Breast epithelium (tissue), 4 donors: ENCODE measurements at regions of chr1 and their contacts with region 1.

Region 1: GRCh38 chr1:210089846-210090245 is 142.8 kb upstream of the SERTAD4 start:
- DNase-seq: no peak
- H3K4me3 ChIP-seq: no peak overlapping the region
- H3K27ac ChIP-seq: no peak overlapping the region
- H3K4me1 ChIP-seq: no peaks in the 10 kb centered on the region
- H3K27me3 ChIP-seq: no peaks in the 10 kb centered on the region
- CTCF ChIP-seq: no peak
- POLR2A ChIP-seq: no peak

Region 2: GRCh38 chr1:210830034-210831028 is 740.5 kb after region 1 on chr1:
- intact Hi-C with region 1: loop called (anchors 10 kb)
- DNase-seq: no peak
- H3K4me3 ChIP-seq: no peak overlapping the region
- H3K27ac ChIP-seq: no peak overlapping the region
- H3K4me1 ChIP-seq: no peaks in the 10 kb centered on the region
- H3K27me3 ChIP-seq: no peaks in the 10 kb centered on the region
- CTCF ChIP-seq: no peak
- POLR2A ChIP-seq: no peak

Region 3: GRCh38 chr1:211527006-211527405 is 1437.2 kb after region 1 on chr1:
- intact Hi-C with region 1: no loop called
- DNase-seq: no peak
- H3K4me3 ChIP-seq: no peak overlapping the region
- H3K27ac ChIP-seq: no peak overlapping the region
- H3K4me1 ChIP-seq: no peaks in the 10 kb centered on the region
- H3K27me3 ChIP-seq: no peaks in the 10 kb centered on the region
- CTCF ChIP-seq: no peak
- POLR2A ChIP-seq: no peak